ENCODE measurements at regions of chr1 and their contacts with region 1.

Region 1: DNA sequence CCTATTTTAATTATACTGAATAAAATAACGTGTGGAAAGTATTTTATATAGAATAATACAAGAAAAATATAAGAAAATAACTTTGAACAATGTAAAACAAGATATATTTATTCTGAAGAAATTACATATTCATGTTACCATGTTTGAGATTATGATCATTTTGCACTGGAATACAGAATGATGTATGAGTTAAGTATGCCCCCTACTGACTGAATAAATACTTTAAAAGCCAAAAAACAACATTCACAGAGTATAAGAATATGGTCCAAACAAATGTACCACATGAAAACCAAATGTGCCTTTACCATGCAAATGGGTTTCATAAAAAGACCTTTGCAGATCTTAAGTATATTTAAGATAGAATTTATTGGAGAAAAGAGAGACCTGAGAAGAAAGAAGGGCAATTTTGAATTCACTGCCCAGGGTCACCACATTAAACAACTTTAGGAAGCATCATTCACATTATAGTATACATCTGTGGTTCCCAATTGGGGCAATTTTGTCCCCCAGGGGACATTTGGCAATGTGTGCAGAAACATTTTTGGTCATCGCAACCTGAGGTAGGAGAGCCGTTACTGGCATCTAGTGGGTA is 136.6 kb upstream of the GFI1 start:
- DNase-seq: no peak
- H3K4me3 Mint-ChIP-seq: no peak overlapping the region
- H3K27ac Mint-ChIP-seq: no peak overlapping the region
- H3K4me1 Mint-ChIP-seq: no peaks in the 10 kb centered on the region
- H3K27me3 Mint-ChIP-seq: no peaks in the 10 kb centered on the region
- CTCF ChIP-seq: no peak

Region 2: GRCh38 chr1:91997607-91998195 is 625.6 kb before region 1 on chr1:
- CTCF ChIA-PET with region 1: no interaction called
- intact Hi-C with region 1: loop called (anchors 2 kb)
- DNase-seq: peak; percentile 45
- H3K4me3 Mint-ChIP-seq: no peak overlapping the region
- H3K27ac Mint-ChIP-seq: no peak overlapping the region
- H3K4me1 Mint-ChIP-seq: no peaks in the 10 kb centered on the region
- H3K27me3 Mint-ChIP-seq: no peaks in the 10 kb centered on the region
- CTCF ChIP-seq: peak; percentile 22

Region 3: DNA sequence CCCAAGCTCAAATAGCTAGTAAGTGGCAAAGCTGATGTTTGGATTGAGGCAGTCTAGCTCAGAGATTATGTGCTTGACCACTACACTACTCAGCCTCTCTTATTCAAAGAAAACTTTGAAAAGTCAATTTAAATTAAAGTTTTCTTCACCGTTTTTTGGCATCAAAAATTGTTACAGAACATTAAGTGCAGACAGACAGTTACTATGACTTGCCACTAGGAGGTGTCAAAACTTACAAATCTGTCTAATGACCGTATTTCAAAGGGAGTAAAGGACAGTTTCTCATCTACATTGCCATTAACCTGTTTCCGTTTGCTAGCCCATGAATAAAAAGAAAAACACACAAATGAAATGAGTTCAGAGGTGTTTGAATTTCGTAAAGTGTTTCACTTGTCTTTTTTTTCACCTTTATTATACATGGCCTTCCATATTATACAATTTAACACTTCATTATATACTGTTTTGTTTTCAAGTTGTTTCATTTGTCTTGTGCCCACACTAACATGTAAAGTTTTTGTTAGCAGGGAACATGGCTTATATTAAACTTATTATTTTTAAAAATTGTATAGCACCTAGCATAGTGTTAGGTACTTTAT is 398.4 kb after region 1 on chr1:
- CTCF ChIA-PET with region 1: no interaction called
- intact Hi-C with region 1: no loop called
- DNase-seq: no peak
- H3K4me3 Mint-ChIP-seq: no peak overlapping the region
- H3K27ac Mint-ChIP-seq: no peak overlapping the region
- H3K4me1 Mint-ChIP-seq: peaks cover 5% of the 10 kb centered on the region
- H3K27me3 Mint-ChIP-seq: peaks cover 32% of the 10 kb centered on the region
- CTCF ChIP-seq: peak; percentile 67

Measured in Calu3 (cell line).